SK-N-SH (cell line): ENCODE measurements at regions of chr9 and their contacts with region 1.

Region 1: DNA sequence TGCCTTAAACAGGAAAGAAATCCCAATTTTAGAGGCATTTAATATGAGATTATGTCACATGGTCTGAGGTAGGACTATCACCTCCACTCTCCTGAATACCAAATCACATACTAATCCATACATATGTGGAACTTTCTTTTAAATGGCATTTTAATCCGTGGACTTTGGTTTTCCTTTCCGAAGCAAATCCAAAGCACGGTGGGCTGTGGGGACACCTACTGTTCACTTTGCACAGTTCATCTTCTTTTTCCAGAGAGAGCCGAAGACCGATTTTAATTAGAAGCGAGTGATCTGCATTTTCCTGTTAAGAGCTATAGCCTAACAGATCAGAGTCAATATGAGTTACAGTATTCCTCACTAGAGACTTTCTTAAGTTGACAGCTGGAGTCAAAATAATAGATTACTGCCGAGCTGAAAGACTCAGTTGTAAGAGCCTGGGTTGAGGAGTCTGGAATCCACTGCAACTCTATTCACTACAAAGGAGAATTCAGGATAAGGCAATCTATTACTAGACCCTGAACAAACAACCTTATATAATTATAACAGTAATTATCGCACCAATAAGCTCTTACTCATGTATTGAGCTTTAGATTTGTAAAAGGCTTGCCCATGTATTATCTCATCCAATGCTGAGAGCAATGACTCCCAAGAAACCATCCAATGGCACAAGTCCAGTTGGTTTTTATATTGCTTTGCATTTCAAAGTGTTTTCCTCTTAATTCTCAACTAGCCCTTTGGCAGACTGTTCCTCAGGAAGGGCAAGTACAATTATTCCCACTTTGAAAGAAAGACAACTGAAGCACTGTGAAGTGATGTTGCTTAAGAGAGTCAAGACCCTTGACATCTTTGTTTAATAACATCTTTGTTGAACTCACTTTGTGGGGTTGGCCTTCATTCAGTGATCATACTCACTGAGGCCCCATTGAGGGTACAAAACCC is 144.7 kb downstream of the TRPM6 start:
- DNase-seq: peak; percentile 39
- H3K4me3 ChIP-seq: peak overlapping the region in 1 of 2 experiments; percentile 44; a peak in 1 of 4 replicates
- H3K27ac ChIP-seq: no peak overlapping the region
- H3K4me1 ChIP-seq: no peaks in the 10 kb centered on the region
- H3K27me3 ChIP-seq: no peaks in the 10 kb centered on the region; the same call in 1 of the 2 replicates
- CTCF ChIP-seq: peak; percentile 74
- EP300 ChIP-seq: no peak
- RAD21 ChIP-seq: peak; percentile 87

Region 2: GRCh38 chr9:74729136-74729695 is 13.8 kb before region 1 on chr9:
- CTCF ChIA-PET with region 1: interaction called, 11 read pairs
- POLR2A ChIA-PET with region 1: no interaction called
- DNase-seq: no peak
- H3K4me3 ChIP-seq: no peak overlapping the region
- H3K27ac ChIP-seq: no peak overlapping the region
- H3K4me1 ChIP-seq: no peaks in the 10 kb centered on the region; a peak in 1 of 4 replicates
- H3K27me3 ChIP-seq: no peaks in the 10 kb centered on the region
- CTCF ChIP-seq: no peak
- EP300 ChIP-seq: no peak
- RAD21 ChIP-seq: no peak

Region 3: DNA sequence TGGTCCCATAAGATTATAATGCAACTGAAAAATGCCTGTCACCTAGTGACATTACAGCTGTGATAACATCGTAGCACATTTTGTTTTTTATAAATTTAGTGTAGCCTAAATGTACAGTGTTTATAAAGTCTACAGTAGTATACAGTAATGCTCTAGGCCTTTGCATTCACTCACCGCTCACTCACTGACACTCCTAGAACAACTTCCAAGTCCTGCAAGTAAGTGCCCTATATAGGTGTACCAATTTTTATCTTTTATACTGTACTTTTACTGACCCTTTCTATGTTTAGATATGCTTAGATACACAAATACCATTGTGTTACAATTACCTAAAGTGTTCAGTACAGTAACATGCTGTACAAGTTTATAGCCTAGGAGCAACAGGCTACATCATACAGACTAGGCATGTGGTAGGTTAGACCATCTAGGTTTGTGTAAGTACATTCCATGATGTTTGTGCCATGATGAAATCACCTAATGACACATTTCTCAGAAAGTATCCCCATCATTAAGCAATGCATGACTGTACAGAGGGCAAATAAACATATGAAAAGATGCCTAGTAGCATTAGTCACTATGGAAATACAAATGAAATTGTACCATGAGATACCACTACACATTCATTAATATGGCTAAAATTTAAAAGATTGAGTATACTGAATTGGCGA is 17.1 kb after region 1 on chr9:
- CTCF ChIA-PET with region 1: interaction called, 12 read pairs
- POLR2A ChIA-PET with region 1: no interaction called
- DNase-seq: no peak
- H3K4me3 ChIP-seq: no peak overlapping the region
- H3K27ac ChIP-seq: no peak overlapping the region
- H3K4me1 ChIP-seq: no peaks in the 10 kb centered on the region
- H3K27me3 ChIP-seq: no peaks in the 10 kb centered on the region
- CTCF ChIP-seq: no peak
- EP300 ChIP-seq: no peak
- RAD21 ChIP-seq: no peak